ENCODE measurements at regions of chr1 and their contacts with region 1.

Region 1: GRCh38 chr1:176374967-176375569 is 87.9 kb upstream of the PAPPA2 start:
- DNase-seq: peak in 1 of 2 donors; percentile 82
- H3K4me3 ChIP-seq: no peak overlapping the region
- H3K27ac ChIP-seq: no peak overlapping the region
- H3K4me1 ChIP-seq: no peaks in the 10 kb centered on the region
- H3K27me3 ChIP-seq: no peaks in the 10 kb centered on the region
- CTCF ChIP-seq: peak; percentile 41 to 74 (median 65)

Region 2: GRCh38 chr1:176691251-176692228 is 316.5 kb after region 1 on chr1:
- intact Hi-C with region 1: loop called (anchors 5 kb)
- DNase-seq: peak in 1 of 2 donors; percentile 66
- H3K4me3 ChIP-seq: no peak overlapping the region
- H3K27ac ChIP-seq: no peak overlapping the region
- H3K4me1 ChIP-seq: peaks cover 0 to 5% of the 10 kb centered on the region in 2 donors
- H3K27me3 ChIP-seq: no peaks in the 10 kb centered on the region
- CTCF ChIP-seq: peak; percentile 36 to 83 (median 73)

Region 3: GRCh38 chr1:176880954-176881595 is 506.0 kb after region 1 on chr1:
- intact Hi-C with region 1: loop called (anchors 2 kb)
- DNase-seq: peak in 1 of 2 donors; percentile 78
- H3K4me3 ChIP-seq: no peak overlapping the region
- H3K27ac ChIP-seq: no peak overlapping the region
- H3K4me1 ChIP-seq: no peaks in the 10 kb centered on the region
- H3K27me3 ChIP-seq: no peaks in the 10 kb centered on the region
- CTCF ChIP-seq: peak; percentile 41 to 80 (median 64)

Measured in ascending aorta (tissue), 2 donors.